Mammary epithelial cell (primary cell): ENCODE measurements at regions of chrX and their contacts with region 1.

Region 1: GRCh38 chrX:110156167-110156754 is 153.3 kb downstream of the TMEM164 start:
- DNase-seq: no peak
- H3K4me3 ChIP-seq: no peak overlapping the region
- H3K27ac ChIP-seq: no peak overlapping the region
- H3K4me1 ChIP-seq: peaks cover 8% of the 10 kb centered on the region
- H3K27me3 ChIP-seq: no peaks in the 10 kb centered on the region
- CTCF ChIP-seq: peak; percentile 45 to 51

Region 2: DNA sequence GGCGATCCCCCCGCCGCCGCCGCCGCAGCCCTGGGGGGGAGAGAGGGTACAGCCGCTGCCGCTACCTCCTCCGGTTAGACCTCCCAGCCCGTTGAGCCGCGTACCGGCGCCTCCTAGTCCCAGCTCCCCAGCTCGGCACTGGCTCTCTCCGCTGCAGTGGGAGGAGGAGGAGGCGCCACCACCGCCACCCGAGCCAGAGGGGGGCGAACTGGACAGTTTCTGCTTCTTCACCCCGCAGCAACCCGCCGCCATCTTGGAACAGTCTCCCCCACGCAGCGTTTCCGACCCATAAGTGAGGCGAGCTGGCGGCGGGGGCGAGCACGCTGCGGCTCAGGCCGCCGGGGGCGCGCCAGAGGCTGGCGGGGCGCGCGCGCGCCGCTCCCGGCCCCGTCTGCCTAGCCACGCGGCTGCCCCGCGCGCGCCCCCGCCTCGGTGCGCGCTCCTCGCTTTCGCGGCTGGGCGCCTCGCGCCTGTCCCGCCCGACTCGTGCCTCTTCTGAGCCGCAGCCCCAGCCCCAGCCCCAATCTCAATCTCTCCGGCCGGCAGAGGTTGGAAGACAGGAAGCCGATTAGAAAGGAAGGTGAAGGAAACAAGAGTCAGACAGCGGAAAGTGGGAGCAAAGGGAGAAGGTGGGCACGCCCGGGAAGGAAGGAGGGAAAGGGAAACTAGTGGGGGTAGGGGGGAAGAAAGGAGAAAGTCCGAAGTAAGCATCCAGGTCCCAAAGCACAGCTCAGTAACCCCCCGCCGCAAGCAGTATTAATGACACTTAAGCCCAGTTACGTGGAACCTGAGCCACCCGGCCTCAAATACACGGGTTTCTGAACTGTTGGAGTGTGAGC is 161.8 kb after region 1 on chrX and contains the start of gene AMMECR1:
- CTCF ChIA-PET with region 1: interaction called, 3 read pairs
- dilution Hi-C with region 1: no loop called
- in situ Hi-C with region 1: no loop called
- intact Hi-C with region 1: loop called (anchors 2 kb)
- DNase-seq: peak; percentile 68
- H3K4me3 ChIP-seq: peak within 1 kb of the TSS; percentile 77 to 84 (median 78)
- H3K27ac ChIP-seq: peak within 1 kb of the TSS; percentile 81
- H3K4me1 ChIP-seq: no peaks in the 10 kb centered on the region
- H3K27me3 ChIP-seq: no peaks in the 10 kb centered on the region
- CTCF ChIP-seq: no peak
- total RNA-seq, gene AMMECR1: 21.0 to 22.7 TPM

Region 3: DNA sequence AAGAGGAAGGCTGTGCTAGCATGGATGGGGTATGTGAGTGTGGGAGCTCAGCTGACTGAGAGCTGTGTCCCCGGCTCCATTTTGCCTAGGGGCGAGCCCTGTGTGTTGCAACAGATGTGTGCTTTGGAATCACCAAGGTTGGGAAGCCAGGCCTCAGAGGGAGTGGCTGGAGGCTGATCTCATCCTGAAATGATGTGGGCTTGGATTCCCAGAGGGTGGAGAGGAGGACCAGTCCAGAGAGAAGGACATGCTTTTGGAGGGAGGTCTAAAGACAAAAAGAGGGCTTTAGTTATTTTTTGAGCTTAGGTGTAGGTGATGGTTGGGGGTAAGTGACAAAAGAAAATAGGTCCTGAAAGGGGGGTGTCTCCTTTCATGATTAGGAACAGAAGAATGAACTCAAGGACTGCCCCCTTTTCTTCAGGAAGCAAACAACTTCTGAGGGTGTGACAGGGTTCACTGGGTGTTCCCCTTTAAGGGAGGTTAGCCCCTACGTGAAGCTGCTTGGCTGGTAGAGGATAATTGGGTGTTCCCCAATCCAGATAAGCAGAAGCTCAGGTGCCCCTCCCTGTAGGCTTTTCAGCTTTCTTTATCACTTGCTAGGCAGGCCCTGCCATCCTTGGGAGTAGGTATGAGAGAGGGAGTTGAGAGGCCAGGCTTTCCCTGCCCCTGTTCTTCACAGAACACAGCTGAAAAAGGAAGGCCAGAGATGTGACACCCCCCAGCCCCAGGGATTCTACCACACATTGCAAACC is 246.4 kb after region 1 on chrX:
- CTCF ChIA-PET with region 1: interaction called, 3 read pairs
- dilution Hi-C with region 1: loop called (anchors 5 kb)
- in situ Hi-C with region 1: loop called in 1 of 2 experiments (anchors 5 kb)
- intact Hi-C with region 1: no loop called
- DNase-seq: peak; percentile 79
- H3K4me3 ChIP-seq: no peak overlapping the region
- H3K27ac ChIP-seq: peak overlapping the region; percentile 82
- H3K4me1 ChIP-seq: peaks cover 23% of the 10 kb centered on the region
- H3K27me3 ChIP-seq: no peaks in the 10 kb centered on the region
- CTCF ChIP-seq: no peak

Region 4: DNA sequence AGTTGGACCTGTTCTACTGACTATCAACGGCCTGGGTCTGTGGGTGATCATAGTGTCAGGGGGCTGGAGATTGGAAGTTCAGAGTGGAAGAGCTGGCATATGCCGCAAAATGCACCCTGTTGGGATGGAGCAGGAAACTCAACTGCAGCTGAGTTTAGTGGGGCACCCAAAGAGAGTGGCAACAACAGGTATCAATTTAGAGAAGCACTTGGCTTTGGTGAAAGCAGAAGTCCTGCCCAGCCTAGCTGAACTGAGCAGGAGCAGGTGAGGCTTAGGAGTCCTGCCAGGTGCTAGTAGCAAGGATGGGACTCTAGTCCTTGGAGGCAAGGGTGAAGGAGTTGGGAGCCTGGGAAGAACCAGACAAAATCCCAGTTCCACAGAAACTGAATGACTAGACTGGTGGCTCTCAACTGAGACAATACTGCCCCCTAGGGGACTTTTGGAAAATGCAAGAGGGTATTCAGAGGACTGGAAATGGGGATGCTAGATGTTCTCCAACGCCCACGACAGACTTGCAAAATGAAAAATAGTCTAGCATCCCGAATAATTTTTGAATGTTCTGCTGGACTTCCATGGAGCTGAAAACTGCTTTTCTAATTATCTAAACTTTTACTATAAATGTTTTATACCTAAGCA is 251.8 kb after region 1 on chrX:
- CTCF ChIA-PET with region 1: interaction called, 5 read pairs
- dilution Hi-C with region 1: loop called (anchors 5 kb)
- in situ Hi-C with region 1: loop called (anchors 5 kb)
- intact Hi-C with region 1: loop called (anchors 1 kb)
- DNase-seq: peak; percentile 63
- H3K4me3 ChIP-seq: no peak overlapping the region
- H3K27ac ChIP-seq: no peak overlapping the region
- H3K4me1 ChIP-seq: peaks cover 20% of the 10 kb centered on the region
- H3K27me3 ChIP-seq: no peaks in the 10 kb centered on the region
- CTCF ChIP-seq: peak; percentile 56 to 78

Region 5: GRCh38 chrX:110412971-110413721 is 256.9 kb after region 1 on chrX:
- CTCF ChIA-PET with region 1: interaction called, 5 read pairs
- dilution Hi-C with region 1: no loop called
- in situ Hi-C with region 1: loop called (anchors 5 kb)
- intact Hi-C with region 1: loop called (anchors 1 kb)
- DNase-seq: peak; percentile 48
- H3K4me3 ChIP-seq: no peak overlapping the region
- H3K27ac ChIP-seq: no peak overlapping the region
- H3K4me1 ChIP-seq: peaks cover 35% of the 10 kb centered on the region
- H3K27me3 ChIP-seq: no peaks in the 10 kb centered on the region
- CTCF ChIP-seq: peak; percentile 79 to 93

Region 6: DNA sequence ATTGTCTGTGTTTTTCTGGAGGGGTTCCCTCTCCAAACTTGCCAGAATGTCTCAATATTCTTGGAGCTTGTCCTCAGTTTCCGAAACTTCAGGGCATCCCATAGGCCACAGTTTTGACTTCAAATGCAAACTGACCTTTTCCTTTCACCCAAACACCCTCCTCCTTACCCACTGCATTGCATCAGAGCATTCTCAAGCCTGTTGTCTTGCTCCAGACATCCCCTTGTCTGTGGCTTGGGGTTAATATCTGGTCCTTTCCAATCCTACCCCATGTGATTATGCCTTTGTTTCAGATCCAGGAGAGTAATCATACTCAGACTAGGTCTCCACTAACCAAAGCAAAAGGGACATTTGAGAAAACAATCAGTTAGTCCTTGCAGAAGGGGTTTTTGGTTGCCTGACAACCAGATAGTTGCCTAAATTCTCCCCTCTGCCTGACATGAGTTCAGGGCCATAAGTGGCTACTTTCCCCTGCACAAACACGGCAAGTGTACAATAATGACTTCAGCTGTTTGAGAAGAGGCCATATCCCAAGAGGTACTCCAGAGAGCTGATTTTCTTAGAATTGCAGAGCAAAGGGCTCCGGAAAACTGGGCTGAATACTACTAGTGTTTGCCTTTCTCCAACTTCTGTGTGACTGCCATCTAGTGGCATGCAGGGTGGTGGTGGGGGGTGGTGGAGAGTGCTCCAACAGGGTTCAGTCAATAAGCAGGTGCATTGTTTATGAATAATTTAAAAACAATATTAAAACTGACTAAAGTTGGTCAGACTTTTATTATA is 509.2 kb after region 1 on chrX:
- CTCF ChIA-PET with region 1: no interaction called
- dilution Hi-C with region 1: no loop called
- in situ Hi-C with region 1: no loop called
- intact Hi-C with region 1: loop called (anchors 10 kb)
- DNase-seq: peak; percentile 9
- H3K4me3 ChIP-seq: no peak overlapping the region
- H3K27ac ChIP-seq: no peak overlapping the region
- H3K4me1 ChIP-seq: no peaks in the 10 kb centered on the region
- H3K27me3 ChIP-seq: no peaks in the 10 kb centered on the region
- CTCF ChIP-seq: peak; percentile 66 to 69

Region 7: DNA sequence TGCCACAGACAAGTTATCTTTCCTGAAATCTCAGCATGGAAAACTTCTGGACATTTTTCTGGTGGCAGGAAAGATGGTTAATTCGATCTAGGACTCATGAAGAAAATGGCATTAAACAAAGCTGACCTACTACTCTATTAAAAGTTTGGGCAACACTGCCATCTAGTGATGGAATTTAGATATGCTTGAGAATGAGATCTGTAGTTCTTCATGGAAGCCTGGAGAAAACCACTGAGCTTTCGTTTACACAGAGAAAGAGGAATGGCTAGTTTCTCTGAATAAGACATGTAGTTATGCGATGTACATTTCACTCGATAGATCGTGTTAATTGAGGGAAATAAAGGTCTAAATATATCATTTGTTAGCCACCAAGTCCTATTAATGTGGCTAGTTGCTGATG is 691.1 kb after region 1 on chrX:
- CTCF ChIA-PET with region 1: no interaction called
- dilution Hi-C with region 1: no loop called
- in situ Hi-C with region 1: loop called in 1 of 2 experiments (anchors 25 kb)
- intact Hi-C with region 1: loop called (anchors 2 kb)
- DNase-seq: peak; percentile 44
- H3K4me3 ChIP-seq: no peak overlapping the region
- H3K27ac ChIP-seq: no peak overlapping the region
- H3K4me1 ChIP-seq: no peaks in the 10 kb centered on the region
- H3K27me3 ChIP-seq: no peaks in the 10 kb centered on the region
- CTCF ChIP-seq: peak; percentile 58 to 60